ENCODE measurements at regions of chr4 and their contacts with region 1.

Region 1: GRCh38 chr4:56435306-56435926 is at the start of gene PPAT:
- DNase-seq: peak; percentile 98
- H3K4me3 ChIP-seq: peak within 1 kb of the TSS; percentile 98
- H3K27ac ChIP-seq: peak within 1 kb of the TSS; percentile 76
- H3K4me1 ChIP-seq: peaks cover 37% of the 10 kb centered on the region
- CTCF ChIP-seq: no peak
- total RNA-seq, gene PPAT: 35.8 and 47.2 TPM in 2 replicates

Region 2: GRCh38 chr4:55395529-55396307 is 1039.7 kb before region 1 on chr4 and contains the start of gene TMEM165:
- CTCF ChIA-PET with region 1: no interaction called
- POLR2A ChIA-PET with region 1: interaction called, 3 read pairs
- intact Hi-C with region 1: loop called (anchors 10 kb)
- DNase-seq: peak; percentile 91
- H3K4me3 ChIP-seq: peak within 1 kb of the TSS; percentile 99
- H3K27ac ChIP-seq: peak within 1 kb of the TSS; percentile 81
- H3K4me1 ChIP-seq: peaks cover 37% of the 10 kb centered on the region
- CTCF ChIP-seq: no peak
- total RNA-seq, gene TMEM165: 67.1 and 70.8 TPM in 2 replicates

Region 3: DNA sequence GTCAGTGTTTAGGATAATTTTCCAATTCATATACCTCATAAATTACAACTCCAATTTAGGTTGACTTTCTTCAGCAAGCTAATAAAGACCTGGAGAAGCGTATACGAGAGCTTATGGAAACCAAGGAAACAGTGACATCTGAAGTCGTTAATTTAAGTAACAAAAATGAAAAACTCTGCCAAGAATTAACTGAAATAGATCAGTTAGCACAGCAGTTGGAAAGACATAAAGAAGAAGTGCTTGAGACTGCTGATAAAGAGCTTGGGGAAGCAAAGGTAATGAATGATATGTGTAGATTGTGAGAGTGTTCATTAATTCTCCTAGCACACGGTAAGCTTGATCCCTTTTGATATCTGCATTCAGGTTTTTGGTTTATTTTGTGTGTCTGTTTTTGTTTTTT is 469.8 kb before region 1 on chr4:
- CTCF ChIA-PET with region 1: no interaction called
- POLR2A ChIA-PET with region 1: no interaction called
- intact Hi-C with region 1: no loop called
- DNase-seq: no peak
- H3K4me3 ChIP-seq: no peak overlapping the region
- H3K27ac ChIP-seq: no peak overlapping the region
- H3K4me1 ChIP-seq: no peaks in the 10 kb centered on the region
- CTCF ChIP-seq: no peak

Region 4: GRCh38 chr4:56048702-56049431 is 386.5 kb before region 1 on chr4:
- CTCF ChIA-PET with region 1: no interaction called
- POLR2A ChIA-PET with region 1: interaction called, 4 read pairs
- intact Hi-C with region 1: loop called (anchors 2 kb)
- DNase-seq: peak; percentile 89
- H3K4me3 ChIP-seq: peak overlapping the region; percentile 81
- H3K27ac ChIP-seq: peak overlapping the region; percentile 72
- H3K4me1 ChIP-seq: peaks cover 31% of the 10 kb centered on the region
- CTCF ChIP-seq: no peak; the same call in 1 of the 2 replicates

Region 5: DNA sequence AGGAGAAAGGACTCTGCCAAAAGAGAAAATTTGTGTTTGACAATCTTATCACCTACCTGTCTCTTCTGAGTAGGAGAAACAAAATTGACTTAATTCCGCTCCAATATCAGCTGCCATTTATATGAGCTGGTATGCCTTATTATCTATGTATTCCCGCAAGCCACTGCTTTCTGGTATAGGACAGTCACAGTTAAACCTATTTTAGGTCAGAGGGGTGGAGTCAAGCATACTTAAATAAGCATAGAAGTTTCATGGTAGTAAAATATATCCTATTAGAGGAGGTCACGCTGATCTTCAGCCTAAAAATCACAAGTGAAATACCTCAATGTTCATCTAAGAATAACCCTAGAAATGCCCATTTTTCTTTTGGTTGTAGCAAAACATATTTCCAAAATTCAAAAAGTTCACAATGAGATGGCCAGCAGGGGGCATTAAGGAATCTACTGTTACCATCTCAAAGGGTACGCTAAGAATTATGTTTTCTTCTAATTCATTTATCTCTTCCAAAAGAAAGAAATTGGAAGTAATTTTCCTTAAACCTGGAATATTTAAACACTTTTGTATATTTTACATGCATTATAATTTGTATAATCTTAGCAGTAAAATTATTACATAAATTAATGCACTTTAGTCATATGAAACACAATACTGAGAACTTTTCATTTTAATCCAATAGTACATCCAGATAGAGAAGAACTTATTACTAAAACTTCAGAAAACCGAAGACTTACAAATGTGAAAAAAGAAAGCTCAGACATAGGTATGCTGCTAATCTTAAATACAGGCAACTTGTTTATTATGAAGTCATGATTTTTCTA is 10.5 kb before region 1 on chr4:
- CTCF ChIA-PET with region 1: interaction called, 5 read pairs
- POLR2A ChIA-PET with region 1: interaction called, 52 read pairs
- intact Hi-C with region 1: no loop called
- DNase-seq: peak; percentile 43
- H3K4me3 ChIP-seq: no peak overlapping the region
- H3K27ac ChIP-seq: peak overlapping the region; percentile 33
- H3K4me1 ChIP-seq: peaks cover 36% of the 10 kb centered on the region
- CTCF ChIP-seq: peak; percentile 91

Region 6: DNA sequence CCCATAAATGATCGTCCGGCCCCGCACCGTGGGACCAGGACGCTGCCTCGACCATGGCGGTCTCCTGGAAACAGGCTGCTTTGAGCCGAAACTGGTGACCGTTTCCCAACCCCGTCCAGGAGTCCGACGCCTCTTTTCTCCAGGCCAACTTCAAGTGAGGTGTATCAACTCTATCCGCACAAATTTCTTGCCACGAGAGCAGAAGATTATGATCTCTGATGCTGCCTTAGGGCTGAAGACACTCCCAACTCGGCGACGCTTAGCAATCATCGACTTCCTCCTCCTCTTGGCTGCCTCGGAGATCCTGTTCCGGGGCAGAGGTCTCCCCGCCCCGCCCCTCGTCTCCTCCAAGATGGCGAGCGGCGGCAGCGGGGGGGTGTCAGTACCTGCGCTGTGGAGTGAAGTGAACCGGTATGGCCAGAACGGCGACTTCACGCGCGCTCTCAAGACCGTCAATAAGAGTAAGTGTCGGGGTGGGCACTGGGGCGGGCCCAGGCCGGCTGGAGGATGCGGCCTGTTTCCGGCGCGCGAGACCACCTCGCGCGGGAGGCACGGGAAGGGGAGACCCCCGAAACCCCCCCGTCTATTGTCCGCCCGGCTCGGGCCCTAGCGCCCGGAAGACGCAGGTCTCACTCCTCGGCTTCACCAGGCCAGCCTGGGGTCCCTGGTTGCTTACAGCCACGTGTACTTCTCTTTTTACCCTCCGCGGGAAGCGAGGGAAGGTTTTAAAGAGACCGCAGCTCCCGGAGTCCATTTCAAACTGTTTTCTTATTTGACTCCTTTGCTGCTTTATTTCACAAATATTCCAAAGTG is 32.1 kb after region 1 on chr4 and contains the start of gene SRP72:
- CTCF ChIA-PET with region 1: no interaction called
- POLR2A ChIA-PET with region 1: interaction called, 38 read pairs
- intact Hi-C with region 1: loop called (anchors 1 kb)
- DNase-seq: peak; percentile 90
- H3K4me3 ChIP-seq: peak within 1 kb of the TSS; percentile 99
- H3K27ac ChIP-seq: peak within 1 kb of the TSS; percentile 83
- H3K4me1 ChIP-seq: peaks cover 36% of the 10 kb centered on the region
- CTCF ChIP-seq: no peak
- total RNA-seq, gene SRP72: 53.5 and 65.8 TPM in 2 replicates

Region 7: DNA sequence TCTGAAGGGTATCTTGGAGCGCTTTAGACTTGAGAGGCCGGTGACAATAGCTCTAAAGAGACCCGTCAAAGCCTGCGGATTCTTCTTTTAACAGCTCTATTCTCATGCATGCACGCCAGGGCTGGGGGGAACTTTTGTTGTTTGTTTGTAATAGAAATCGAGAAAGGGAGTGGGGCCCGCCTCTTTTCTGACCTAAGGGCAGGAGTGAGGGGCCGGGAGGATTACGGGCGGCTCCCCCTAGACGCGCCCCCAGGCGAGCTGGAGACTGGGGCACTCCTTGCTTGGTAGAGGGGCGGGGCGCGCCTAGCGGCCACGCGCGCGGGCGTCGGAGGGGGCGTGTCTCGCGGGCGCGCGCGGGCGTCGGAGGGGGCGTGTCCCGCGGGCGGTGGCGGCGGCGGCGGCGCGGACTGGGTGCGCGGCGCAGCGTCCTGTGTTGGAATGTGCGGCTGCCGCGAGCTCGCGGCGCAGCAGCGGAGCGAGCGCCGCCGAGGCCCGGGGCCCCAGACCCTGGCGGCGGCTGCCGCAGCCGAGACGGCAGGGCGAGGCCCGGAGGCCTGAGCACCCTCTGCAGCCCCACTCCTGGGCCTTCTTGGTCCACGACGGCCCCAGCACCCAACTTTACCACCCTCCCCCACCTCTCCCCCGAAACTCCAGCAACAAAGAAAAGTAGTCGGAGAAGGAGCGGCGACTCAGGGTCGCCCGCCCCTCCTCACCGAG is 472.2 kb after region 1 on chr4 and contains the start of gene REST:
- CTCF ChIA-PET with region 1: no interaction called
- POLR2A ChIA-PET with region 1: no interaction called
- intact Hi-C with region 1: loop called (anchors 2 kb)
- DNase-seq: peak; percentile 86
- H3K4me3 ChIP-seq: peak within 1 kb of the TSS; percentile 84
- H3K27ac ChIP-seq: peak within 1 kb of the TSS; percentile 89
- H3K4me1 ChIP-seq: peaks cover 37% of the 10 kb centered on the region
- CTCF ChIP-seq: no peak
- total RNA-seq, gene REST: 26.7 and 27.3 TPM in 2 replicates